GM10248 (cell line): ENCODE measurements at regions of chr9 and their contacts with region 1.

Region 1: DNA sequence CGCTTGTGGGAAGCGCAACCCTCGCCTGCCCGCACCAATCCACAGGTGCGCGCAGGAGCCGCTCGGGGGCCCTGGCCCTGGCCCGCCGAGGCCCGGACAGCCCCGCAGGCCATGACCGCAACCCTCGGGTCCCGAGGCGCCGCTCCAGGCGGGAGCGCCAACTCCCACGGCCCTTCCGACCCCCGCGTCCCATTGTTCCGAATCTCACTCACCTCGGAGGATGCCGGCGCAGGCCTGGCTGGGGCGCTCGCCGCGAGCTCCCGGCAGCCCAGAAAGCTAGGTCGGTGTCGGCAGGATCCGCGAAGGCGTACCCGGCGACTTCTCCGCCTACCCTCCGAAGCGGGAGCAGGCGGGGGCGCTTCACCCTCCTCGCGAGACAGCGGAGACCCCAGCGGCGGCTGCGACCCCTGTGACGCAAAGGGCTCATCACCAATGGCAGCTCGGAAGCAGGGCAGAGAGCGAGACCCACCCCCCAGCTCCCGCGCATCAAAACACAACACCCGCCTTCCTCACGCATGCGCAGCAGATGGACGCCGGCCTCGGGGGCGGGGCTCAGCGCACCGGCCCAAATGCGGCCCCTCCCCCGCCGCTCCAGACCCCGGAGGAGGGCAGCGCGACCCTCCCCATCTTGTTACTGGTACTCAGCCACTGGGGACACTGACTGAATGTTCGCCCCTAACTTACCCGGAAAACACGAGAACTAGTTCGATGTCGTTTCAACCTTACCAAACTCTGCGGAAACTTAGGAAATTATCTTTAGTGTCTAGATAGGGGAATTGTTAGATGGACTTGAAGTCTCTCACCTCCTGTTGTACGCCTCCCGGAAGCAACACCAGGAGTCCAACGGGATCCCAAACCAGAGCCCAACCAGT is 1.3 kb upstream of the SMIM27 start:
- DNase-seq: peak; percentile 98
- CTCF ChIP-seq: no peak

Region 2: DNA sequence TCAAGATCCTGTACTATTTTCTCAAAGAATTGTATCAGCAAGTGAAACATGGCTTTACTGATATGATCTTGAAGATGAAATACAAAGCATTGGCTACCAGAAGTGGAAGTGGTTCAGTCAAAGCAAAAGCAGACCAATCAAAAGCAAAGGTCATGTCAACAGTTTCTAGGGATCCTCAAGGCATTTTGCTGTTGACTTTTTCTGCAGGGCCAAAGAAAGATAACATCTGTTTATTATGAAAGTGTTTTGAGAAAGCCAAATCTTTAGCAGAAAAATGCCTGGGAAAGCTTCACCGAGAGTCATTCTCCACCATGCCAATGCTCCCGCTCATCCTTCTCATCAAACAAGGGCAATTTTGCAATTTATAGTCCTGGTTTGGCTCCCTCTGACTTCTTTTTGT is 256.7 kb before region 1 on chr9:
- CTCF ChIA-PET with region 1: no interaction called
- POLR2A ChIA-PET with region 1: no interaction called
- DNase-seq: no peak
- CTCF ChIP-seq: no peak

Region 3: GRCh38 chr9:32566770-32567169 is 16.0 kb after region 1 on chr9:
- CTCF ChIA-PET with region 1: interaction called, 22 read pairs
- POLR2A ChIA-PET with region 1: no interaction called
- DNase-seq: no peak
- CTCF ChIP-seq: no peak

Region 4: DNA sequence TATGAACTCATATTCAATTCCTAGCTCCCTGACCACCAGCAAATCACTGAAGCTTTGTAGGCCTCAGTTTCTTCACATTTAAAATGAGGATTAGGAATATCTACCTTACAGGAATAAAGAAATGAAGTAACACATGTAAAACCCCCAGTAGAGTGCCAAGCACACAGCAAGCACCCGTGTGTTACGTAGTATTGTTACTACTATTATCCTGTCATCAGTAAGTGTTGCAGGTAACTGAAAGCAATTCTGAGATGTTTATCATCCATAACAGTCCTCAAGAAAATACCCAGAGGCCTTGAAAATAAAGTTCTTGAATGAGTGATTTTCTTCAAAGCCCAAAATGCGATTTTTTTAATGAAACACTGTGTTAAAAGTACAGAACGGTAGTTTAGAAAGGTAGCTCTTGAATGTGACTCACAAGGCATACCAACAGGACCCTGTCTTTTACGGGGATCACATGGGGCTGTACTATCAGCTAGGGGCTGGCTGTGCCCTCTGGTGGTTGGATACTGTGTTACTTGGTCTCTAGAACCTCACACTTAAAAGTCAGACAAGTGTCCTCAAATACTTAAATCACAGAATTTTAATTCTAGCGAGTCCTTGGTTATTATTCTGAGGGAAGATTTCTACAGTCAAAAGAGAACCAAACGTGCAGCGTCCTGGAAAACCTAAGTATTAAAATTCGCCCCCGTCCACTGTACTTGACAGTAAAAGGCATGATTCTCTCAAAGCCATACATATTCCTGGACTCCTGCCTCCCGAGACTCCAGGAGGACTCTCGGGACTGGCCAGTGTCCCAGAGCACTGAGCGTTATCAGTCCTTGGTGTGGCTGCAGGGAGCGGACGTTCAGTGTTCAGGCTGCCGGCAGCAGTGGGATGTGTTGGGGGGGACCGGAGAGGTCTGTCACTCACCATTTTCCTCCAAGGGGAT is 21.4 kb after region 1 on chr9:
- CTCF ChIA-PET with region 1: interaction called, 32 read pairs
- POLR2A ChIA-PET with region 1: no interaction called
- DNase-seq: peak; percentile 78
- CTCF ChIP-seq: peak; percentile 65

Region 5: GRCh38 chr9:32886021-32886420 is 335.2 kb after region 1 on chr9:
- CTCF ChIA-PET with region 1: no interaction called
- POLR2A ChIA-PET with region 1: no interaction called
- DNase-seq: no peak
- CTCF ChIP-seq: no peak